ENCODE measurements at regions of chr3 and their contacts with region 1.

Region 1: DNA sequence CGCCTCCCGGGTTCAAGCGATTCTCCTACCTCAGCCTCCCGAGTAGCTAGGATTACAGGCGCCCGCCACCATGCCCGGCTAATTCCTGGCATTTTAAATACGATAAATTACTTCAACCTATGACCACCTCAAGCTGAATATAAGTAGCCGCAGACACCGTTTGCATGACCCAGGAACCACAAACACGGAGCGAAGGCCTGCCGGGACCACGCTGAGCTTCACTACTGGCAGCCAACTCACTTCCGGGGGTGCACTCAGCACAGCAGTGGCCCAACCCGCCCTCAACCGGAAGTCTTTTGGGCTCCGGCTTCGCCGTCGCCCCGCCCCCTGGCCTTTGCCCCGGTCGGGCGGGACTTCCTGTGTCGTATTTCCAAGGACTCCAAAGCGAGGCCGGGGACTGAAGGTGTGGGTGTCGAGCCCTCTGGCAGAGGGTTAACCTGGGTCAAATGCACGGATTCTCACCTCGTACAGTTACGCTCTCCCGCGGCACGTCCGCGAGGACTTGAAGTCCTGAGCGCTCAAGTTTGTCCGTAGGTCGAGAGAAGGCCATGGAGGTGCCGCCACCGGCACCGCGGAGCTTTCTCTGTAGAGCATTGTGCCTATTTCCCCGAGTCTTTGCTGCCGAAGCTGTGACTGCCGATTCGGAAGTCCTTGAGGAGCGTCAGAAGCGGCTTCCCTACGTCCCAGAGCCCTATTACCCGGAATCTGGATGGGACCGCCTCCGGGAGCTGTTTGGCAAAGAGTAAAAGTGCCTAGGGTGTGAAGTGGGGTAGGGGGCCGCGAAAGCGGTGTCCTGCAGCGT is at the start of gene TIMMDC1:
- DNase-seq: peak; percentile 94 to 99 (median 98)
- ATAC-seq: peak; percentile 98 to 99 (median 99)
- H3K4me3 ChIP-seq: peak within 1 kb of the TSS; percentile 72 to 99
- H3K4me3 Mint-ChIP-seq: peak within 1 kb of the TSS; percentile 93 to 100 (median 98)
- H3K27ac ChIP-seq: peak within 1 kb of the TSS; percentile 89
- H3K27ac Mint-ChIP-seq: peak within 1 kb of the TSS; percentile 95 to 100
- H3K4me1 ChIP-seq: peaks cover 14 to 21% of the 10 kb centered on the region in 2 experiments
- H3K4me1 Mint-ChIP-seq: peaks cover 32 to 40% (median 38%) of the 10 kb centered on the region in 3 donors
- H3K27me3 ChIP-seq: no peaks in the 10 kb centered on the region
- H3K27me3 Mint-ChIP-seq: no peaks in the 10 kb centered on the region
- total RNA-seq, gene TIMMDC1: 35.9 to 74.3 (median 68.0) TPM

Region 2: GRCh38 chr3:118850687-118851086 is 647.7 kb before region 1 on chr3:
- CTCF ChIA-PET with region 1: no interaction called
- POLR2A ChIA-PET with region 1: interaction called in 1 of 2 experiments, 12 read pairs
- DNase-seq: no peak
- ATAC-seq: no peak
- H3K4me3 ChIP-seq: no peak overlapping the region
- H3K4me3 Mint-ChIP-seq: no peak overlapping the region
- H3K27ac ChIP-seq: no peak overlapping the region
- H3K27ac Mint-ChIP-seq: no peak overlapping the region
- H3K4me1 ChIP-seq: no peaks in the 10 kb centered on the region
- H3K4me1 Mint-ChIP-seq: peaks cover 6 to 9% (median 7%) of the 10 kb centered on the region in 3 donors
- H3K27me3 ChIP-seq: no peaks in the 10 kb centered on the region
- H3K27me3 Mint-ChIP-seq: peaks cover 0 to 5% of the 10 kb centered on the region in 2 donors

Region 3: GRCh38 chr3:119257682-119258410 is 240.5 kb before region 1 on chr3:
- CTCF ChIA-PET with region 1: interaction called in 1 of 2 experiments, 10 read pairs
- POLR2A ChIA-PET with region 1: no interaction called
- DNase-seq: no peak
- ATAC-seq: no peak
- H3K4me3 ChIP-seq: no peak overlapping the region
- H3K4me3 Mint-ChIP-seq: no peak overlapping the region
- H3K27ac ChIP-seq: no peak overlapping the region
- H3K27ac Mint-ChIP-seq: no peak overlapping the region
- H3K4me1 ChIP-seq: peaks cover 0 to 4% of the 10 kb centered on the region in 2 experiments
- H3K4me1 Mint-ChIP-seq: peaks cover 0 to 7% (median 6%) of the 10 kb centered on the region in 3 donors
- H3K27me3 ChIP-seq: no peaks in the 10 kb centered on the region
- H3K27me3 Mint-ChIP-seq: no peaks in the 10 kb centered on the region

Region 4: GRCh38 chr3:119408243-119408950 is 90.0 kb before region 1 on chr3:
- CTCF ChIA-PET with region 1: no interaction called
- POLR2A ChIA-PET with region 1: interaction called in 1 of 2 experiments, 11 read pairs
- DNase-seq: no peak
- ATAC-seq: no peak
- H3K4me3 ChIP-seq: no peak overlapping the region
- H3K4me3 Mint-ChIP-seq: no peak overlapping the region
- H3K27ac ChIP-seq: no peak overlapping the region
- H3K27ac Mint-ChIP-seq: no peak overlapping the region
- H3K4me1 ChIP-seq: no peaks in the 10 kb centered on the region
- H3K4me1 Mint-ChIP-seq: no peaks in the 10 kb centered on the region
- H3K27me3 ChIP-seq: no peaks in the 10 kb centered on the region
- H3K27me3 Mint-ChIP-seq: no peaks in the 10 kb centered on the region

Region 5: DNA sequence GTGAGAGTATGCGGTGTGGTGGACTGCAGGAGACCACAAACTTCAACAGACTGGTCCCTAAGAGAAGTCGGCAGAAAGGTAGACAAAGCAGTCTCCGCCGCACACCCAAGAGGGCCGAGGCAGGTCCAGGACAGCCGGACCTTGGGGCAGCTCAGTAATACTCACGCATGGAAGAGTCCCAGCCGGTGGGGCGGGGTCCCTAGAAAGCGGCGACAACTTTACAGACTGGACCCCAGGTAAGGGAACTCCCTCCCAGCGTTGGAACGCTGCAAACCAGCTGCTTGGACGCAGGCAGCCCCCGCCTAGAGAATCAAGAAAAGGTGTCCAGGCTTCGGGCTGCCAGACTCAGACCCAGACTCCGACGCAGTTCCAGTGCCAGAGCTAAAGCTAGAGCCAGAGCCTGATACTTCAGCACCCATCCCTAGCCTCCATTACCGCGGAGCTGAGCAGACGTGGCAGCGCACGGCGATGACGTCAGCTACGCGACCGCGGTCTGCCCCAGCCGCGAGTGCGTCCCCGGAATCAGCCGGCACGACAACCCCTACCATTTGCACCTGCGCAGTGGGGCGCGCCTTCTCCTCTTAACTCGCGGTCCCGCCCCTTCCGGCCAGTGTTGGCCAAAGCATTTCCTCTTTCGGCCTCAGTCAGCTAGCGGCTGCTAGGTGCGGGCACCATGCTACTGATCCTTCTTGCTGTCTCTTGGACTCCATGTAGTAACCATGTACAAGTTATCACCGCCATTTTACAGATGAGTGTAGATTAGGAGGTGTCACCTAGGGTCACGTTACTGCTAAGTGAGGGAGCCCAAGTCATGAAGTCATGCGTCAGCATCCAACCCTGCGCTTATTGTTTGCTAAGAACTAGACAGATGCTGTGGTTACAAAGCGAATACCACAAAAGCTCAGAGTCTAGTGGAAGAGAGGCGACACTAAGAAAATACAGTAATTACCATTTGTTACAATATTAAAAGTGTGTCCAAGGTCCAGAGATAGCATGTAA is 34.9 kb before region 1 on chr3 and contains the start of gene TMEM39A:
- CTCF ChIA-PET with region 1: interaction called, 3 to 5 read pairs
- POLR2A ChIA-PET with region 1: interaction called, 10 to 32 read pairs
- DNase-seq: peak; percentile 97 to 100 (median 98)
- ATAC-seq: peak; percentile 84 to 92 (median 89)
- H3K4me3 ChIP-seq: peak within 1 kb of the TSS; percentile 97 to 99
- H3K4me3 Mint-ChIP-seq: peak within 1 kb of the TSS; percentile 94 to 96 (median 94)
- H3K27ac ChIP-seq: peak within 1 kb of the TSS; percentile 88
- H3K27ac Mint-ChIP-seq: peak within 1 kb of the TSS; percentile 97 to 98
- H3K4me1 ChIP-seq: peaks cover 10 to 23% of the 10 kb centered on the region in 2 experiments
- H3K4me1 Mint-ChIP-seq: peaks cover 37 to 50% (median 41%) of the 10 kb centered on the region in 3 donors
- H3K27me3 ChIP-seq: no peaks in the 10 kb centered on the region
- H3K27me3 Mint-ChIP-seq: no peaks in the 10 kb centered on the region
- total RNA-seq, gene TMEM39A: 35.4 to 59.5 (median 38.7) TPM

Region 6: GRCh38 chr3:119469381-119470189 is 28.8 kb before region 1 on chr3:
- CTCF ChIA-PET with region 1: interaction called, 3 to 7 read pairs
- POLR2A ChIA-PET with region 1: interaction called, 4 to 32 read pairs
- DNase-seq: peak in 5 of 35 experiments; percentile 1 to 36 (median 11)
- ATAC-seq: peak; percentile 30 to 38 (median 35)
- H3K4me3 ChIP-seq: peak overlapping the region; percentile 88
- H3K4me3 Mint-ChIP-seq: peak overlapping the region; percentile 91 to 96 (median 93)
- H3K27ac ChIP-seq: peak overlapping the region; percentile 65
- H3K27ac Mint-ChIP-seq: peak overlapping the region; percentile 78 to 87
- H3K4me1 ChIP-seq: peaks cover 4 to 25% of the 10 kb centered on the region in 2 experiments
- H3K4me1 Mint-ChIP-seq: peaks cover 28 to 33% (median 32%) of the 10 kb centered on the region in 3 donors
- H3K27me3 ChIP-seq: no peaks in the 10 kb centered on the region
- H3K27me3 Mint-ChIP-seq: no peaks in the 10 kb centered on the region

Region 7: DNA sequence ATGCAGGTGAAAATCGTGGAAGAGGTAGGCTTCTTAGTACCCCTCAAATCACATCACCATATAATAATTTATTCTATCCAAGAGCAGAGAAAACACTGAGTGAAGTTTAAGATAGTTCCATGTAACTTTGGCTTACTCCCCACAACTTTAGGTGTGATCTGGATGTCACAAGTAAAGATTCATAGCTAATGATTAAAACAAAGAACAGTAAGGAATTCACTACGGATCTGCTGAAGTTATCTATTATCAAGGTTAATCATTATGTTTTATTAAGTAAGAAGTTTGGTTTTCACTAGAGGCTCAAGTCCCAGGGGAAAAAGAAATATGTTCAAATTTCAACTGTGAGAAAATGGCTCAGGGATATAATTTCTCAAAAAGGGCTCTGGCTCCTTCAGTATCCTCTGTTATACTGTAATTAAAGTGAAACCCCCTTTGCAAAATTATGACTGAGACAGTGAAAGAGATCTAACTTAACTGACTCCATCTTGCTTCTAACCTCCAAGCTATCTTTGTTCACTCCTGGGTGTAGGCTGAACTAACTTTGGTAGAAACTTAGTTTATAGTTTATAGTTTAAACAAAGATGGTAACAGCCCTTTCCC is 43.9 kb after region 1 on chr3:
- CTCF ChIA-PET with region 1: no interaction called
- POLR2A ChIA-PET with region 1: no interaction called
- DNase-seq: no peak
- ATAC-seq: no peak
- H3K4me3 ChIP-seq: no peak overlapping the region
- H3K4me3 Mint-ChIP-seq: no peak overlapping the region
- H3K27ac ChIP-seq: no peak overlapping the region
- H3K27ac Mint-ChIP-seq: no peak overlapping the region
- H3K4me1 ChIP-seq: no peaks in the 10 kb centered on the region
- H3K4me1 Mint-ChIP-seq: no peaks in the 10 kb centered on the region
- H3K27me3 ChIP-seq: no peaks in the 10 kb centered on the region
- H3K27me3 Mint-ChIP-seq: no peaks in the 10 kb centered on the region